SK-N-SH (cell line): ENCODE measurements at regions of chr5 and their contacts with region 1.

Region 1: GRCh38 chr5:33588654-33589372 is 148.0 kb downstream of the TARS1 start:
- DNase-seq: peak; percentile 29
- H3K4me3 ChIP-seq: peak overlapping the region in 1 of 2 experiments; percentile 35; a peak in 1 of 4 replicates
- H3K27ac ChIP-seq: no peak overlapping the region
- H3K4me1 ChIP-seq: no peaks in the 10 kb centered on the region
- H3K27me3 ChIP-seq: no peaks in the 10 kb centered on the region
- CTCF ChIP-seq: peak; percentile 64
- EP300 ChIP-seq: no peak
- RAD21 ChIP-seq: peak; percentile 42

Region 2: GRCh38 chr5:33576726-33577590 is 11.9 kb before region 1 on chr5:
- CTCF ChIA-PET with region 1: interaction called, 30 read pairs
- POLR2A ChIA-PET with region 1: no interaction called
- DNase-seq: no peak
- H3K4me3 ChIP-seq: no peak overlapping the region
- H3K27ac ChIP-seq: no peak overlapping the region
- H3K4me1 ChIP-seq: no peaks in the 10 kb centered on the region
- H3K27me3 ChIP-seq: no peaks in the 10 kb centered on the region; the same call in 1 of the 2 replicates
- CTCF ChIP-seq: no peak
- EP300 ChIP-seq: no peak
- RAD21 ChIP-seq: no peak

Region 3: DNA sequence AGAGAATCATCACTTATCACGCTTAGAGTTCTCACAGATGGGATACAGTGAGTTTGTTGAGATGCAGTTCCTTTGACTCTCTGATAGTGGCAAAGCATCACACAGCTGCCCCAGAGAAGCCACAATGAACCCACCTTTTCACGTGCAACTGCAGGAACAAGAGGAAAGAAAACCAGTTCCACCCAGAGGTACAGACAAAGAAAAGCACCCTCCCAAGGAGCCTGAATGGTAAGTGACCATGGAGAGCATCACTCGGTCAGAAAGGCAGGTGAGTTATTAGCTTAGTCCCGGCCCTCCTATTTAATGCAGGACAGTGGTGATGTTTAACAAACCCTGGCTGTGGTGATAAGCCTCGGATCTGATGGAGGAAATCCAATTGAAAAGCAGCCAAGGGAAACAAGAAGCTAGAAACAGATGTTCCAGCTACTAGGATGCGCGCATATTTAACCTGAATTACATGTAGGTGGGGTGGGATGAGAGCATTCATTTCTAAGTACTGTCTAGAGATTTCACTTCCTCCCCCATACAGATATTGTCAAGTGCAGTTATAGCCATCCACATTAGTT is 19.7 kb after region 1 on chr5:
- CTCF ChIA-PET with region 1: interaction called, 15 read pairs
- POLR2A ChIA-PET with region 1: no interaction called
- DNase-seq: peak; percentile 34
- H3K4me3 ChIP-seq: no peak overlapping the region
- H3K27ac ChIP-seq: no peak overlapping the region
- H3K4me1 ChIP-seq: peaks cover 0 to 6% of the 10 kb centered on the region in 2 experiments; a peak in 2 of 4 replicates
- H3K27me3 ChIP-seq: no peaks in the 10 kb centered on the region; the same call in 1 of the 2 replicates
- CTCF ChIP-seq: no peak
- EP300 ChIP-seq: peak in 1 of 2 experiments; percentile 36; a peak in 1 of 4 replicates
- RAD21 ChIP-seq: no peak